Activated T-helper 1 cell treated with anti-CD3 and anti-CD28 coated beads, Interleukin-12 subunit alpha, Interleukin-12 subunit beta, Interleukin-2, Interleukin-4 antibody, amounts not matched to agents 30 ng/mL and 10 ng/mL and 1 ng/mL, durations not matched to agents 14 hours and 24 hours and 36 hours (primary cell): ENCODE measurements at regions of chr3 and their contacts with region 1.

Region 1: DNA sequence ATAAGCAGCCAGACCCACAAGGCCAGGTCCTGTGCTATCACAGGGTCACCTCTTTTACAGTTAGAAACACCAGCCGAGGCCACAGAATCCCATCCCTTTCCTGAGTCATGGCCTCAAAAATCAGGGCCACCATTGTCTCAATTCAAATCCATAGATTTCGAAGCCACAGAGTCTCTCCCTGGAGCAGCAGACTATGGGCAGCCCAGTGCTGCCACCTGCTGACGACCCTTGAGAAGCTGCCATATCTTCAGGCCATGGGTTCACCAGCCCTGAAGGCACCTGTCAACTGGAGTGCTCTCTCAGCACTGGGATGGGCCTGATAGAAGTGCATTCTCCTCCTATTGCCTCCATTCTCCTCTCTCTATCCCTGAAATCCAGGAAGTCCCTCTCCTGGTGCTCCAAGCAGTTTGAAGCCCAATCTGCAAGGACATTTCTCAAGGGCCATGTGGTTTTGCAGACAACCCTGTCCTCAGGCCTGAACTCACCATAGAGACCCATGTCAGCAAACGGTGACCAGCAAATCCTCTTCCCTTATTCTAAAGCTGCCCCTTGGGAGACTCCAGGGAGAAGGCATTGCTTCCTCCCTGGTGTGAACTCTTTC is 39.6 kb downstream of the TGM4 start:
- DNase-seq: peak; percentile 27
- H3K4me3 Mint-ChIP-seq: no peak overlapping the region
- H3K27ac Mint-ChIP-seq: no peak overlapping the region
- H3K4me1 Mint-ChIP-seq: no peaks in the 10 kb centered on the region
- H3K27me3 Mint-ChIP-seq: peaks cover 3% of the 10 kb centered on the region

Region 2: GRCh38 chr3:44323341-44323955 is 590.5 kb before region 1 on chr3:
- intact Hi-C with region 1: loop called (anchors 1 kb)
- DNase-seq: peak; percentile 22
- H3K4me3 Mint-ChIP-seq: no peak overlapping the region
- H3K27ac Mint-ChIP-seq: no peak overlapping the region
- H3K4me1 Mint-ChIP-seq: no peaks in the 10 kb centered on the region
- H3K27me3 Mint-ChIP-seq: peaks cover 23% of the 10 kb centered on the region

Region 3: GRCh38 chr3:44870381-44871078 is 43.4 kb before region 1 on chr3:
- intact Hi-C with region 1: no loop called
- DNase-seq: no peak
- H3K4me3 Mint-ChIP-seq: no peak overlapping the region
- H3K27ac Mint-ChIP-seq: no peak overlapping the region
- H3K4me1 Mint-ChIP-seq: peaks cover 19% of the 10 kb centered on the region
- H3K27me3 Mint-ChIP-seq: no peaks in the 10 kb centered on the region